Activated CD4-positive, alpha-beta memory T cell treated with anti-CD3 and anti-CD28 coated beads, Interleukin-2, amount 10 ng/mL, durations not matched to agents 7 days and 5 days (primary cell): ENCODE measurements at regions of chr1 and their contacts with region 1.

Region 1: DNA sequence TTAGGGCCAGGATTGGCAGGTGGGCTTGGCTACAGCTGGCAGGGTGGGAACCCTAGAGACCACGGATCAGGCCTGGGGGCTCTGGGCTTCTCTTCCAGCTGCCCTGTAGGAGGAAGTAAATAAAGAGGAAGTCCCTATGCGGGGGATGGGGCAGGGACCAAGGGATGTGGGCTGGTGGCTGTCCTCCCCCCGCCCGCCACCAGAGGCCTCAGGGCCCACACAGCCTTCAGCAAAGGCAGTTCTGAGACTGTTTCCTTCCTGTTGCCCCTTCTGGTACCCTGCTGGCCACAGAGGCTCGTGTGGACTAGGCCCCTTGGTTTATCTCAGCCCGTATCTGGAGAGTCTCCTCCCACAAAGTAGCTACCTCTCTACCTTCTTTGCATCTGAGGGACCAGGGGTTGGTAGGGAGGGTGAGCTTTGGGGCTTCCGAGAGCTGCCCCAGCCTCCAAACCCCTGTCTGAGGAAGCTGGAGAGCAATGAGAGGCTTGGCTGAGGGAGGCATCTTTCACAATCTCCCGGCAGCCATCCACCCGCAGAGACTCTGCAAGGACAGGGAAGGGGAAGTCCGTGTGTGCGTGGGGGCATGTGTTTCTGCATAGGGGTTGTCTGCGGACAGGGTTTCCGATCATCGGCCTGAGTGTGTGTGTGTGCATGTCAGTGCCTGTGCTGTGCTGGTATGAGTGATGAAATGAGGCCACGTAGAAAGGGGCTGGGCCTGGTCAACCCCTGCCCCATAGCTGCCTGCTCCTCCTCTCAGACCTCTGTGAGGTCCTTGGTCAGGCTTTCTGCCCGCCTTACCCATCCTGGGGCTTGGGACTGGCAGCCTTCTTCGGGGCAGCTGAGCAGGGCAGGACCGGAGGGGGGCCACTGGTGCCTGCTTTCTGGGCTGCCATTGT is 12.5 kb downstream of the RPS6KA1 start:
- DNase-seq: peak; percentile 89
- H3K4me3 Mint-ChIP-seq: peak overlapping the region; percentile 74
- H3K27ac Mint-ChIP-seq: peak overlapping the region; percentile 96
- H3K4me1 Mint-ChIP-seq: peaks cover 93% of the 10 kb centered on the region
- H3K27me3 Mint-ChIP-seq: no peaks in the 10 kb centered on the region

Region 2: DNA sequence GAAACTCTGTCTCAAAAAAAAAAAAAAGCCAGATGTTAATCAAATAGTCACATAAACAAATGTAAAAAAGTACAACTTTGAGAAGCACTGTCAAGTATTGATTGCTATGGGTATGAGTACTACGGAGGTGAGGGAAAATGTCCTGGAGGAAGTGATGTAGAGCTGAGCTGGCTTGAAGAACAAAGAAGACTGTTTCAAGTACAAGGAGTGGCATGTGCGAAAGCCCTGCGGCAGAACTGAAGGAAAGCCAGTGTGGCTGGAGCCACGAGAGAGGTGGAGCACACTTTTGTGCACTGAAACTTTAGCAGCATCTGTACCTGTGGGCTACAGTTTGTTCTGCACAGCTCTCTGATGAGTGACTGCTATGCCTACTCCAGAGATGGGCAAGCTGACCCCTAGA is 17.9 kb before region 1 on chr1:
- CTCF ChIA-PET with region 1: interaction called, 45 read pairs
- POLR2A ChIA-PET with region 1: interaction called, 62 read pairs
- DNase-seq: no peak
- H3K4me3 Mint-ChIP-seq: no peak overlapping the region
- H3K27ac Mint-ChIP-seq: no peak overlapping the region
- H3K4me1 Mint-ChIP-seq: peaks cover 8% of the 10 kb centered on the region
- H3K27me3 Mint-ChIP-seq: peaks cover 25% of the 10 kb centered on the region

Region 3: DNA sequence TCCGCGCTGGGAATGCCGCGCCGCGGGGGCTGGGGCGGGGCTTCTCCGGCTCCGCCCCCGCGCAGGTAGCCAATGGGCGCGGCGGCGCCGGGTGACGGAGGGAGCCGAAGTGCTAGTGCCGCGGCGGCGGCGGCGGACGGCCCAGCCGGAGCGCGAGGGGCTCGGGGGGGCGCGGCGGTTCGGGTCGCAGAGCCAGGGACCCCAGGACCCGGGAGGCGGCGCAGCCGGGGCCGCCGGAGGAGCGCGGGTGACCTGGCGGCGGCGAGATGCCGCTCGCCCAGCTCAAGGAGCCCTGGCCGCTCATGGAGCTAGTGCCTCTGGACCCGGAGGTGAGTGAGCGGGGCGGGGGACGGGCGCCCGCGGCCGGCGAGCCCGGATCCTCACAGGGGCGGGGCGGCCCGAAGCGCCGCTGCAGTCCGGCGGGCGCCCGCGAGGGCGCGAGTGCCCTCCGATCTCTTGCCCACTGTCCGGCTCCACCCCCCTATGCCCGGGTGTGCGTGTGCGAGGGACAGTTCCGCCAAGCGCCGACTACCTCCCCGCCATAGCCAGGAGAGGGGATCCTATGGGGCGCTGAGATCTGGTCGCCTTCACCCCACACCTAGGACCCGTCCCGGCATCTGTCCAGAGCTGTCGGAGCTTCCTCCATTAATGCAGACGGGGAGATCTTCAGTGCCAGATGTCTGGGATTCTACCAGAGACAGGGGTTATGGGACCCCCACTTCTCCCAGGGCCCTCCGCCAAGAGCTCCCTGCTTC is 12.2 kb before region 1 on chr1 and contains the start of gene RPS6KA1:
- CTCF ChIA-PET with region 1: interaction called, 45 read pairs
- POLR2A ChIA-PET with region 1: interaction called, 62 read pairs
- DNase-seq: peak; percentile 71
- H3K4me3 Mint-ChIP-seq: peak within 1 kb of the TSS; percentile 84
- H3K27ac Mint-ChIP-seq: peak within 1 kb of the TSS; percentile 80
- H3K4me1 Mint-ChIP-seq: peaks cover 43% of the 10 kb centered on the region
- H3K27me3 Mint-ChIP-seq: peaks cover 5% of the 10 kb centered on the region
- total RNA-seq, gene RPS6KA1: 170 to 175 TPM

Region 4: DNA sequence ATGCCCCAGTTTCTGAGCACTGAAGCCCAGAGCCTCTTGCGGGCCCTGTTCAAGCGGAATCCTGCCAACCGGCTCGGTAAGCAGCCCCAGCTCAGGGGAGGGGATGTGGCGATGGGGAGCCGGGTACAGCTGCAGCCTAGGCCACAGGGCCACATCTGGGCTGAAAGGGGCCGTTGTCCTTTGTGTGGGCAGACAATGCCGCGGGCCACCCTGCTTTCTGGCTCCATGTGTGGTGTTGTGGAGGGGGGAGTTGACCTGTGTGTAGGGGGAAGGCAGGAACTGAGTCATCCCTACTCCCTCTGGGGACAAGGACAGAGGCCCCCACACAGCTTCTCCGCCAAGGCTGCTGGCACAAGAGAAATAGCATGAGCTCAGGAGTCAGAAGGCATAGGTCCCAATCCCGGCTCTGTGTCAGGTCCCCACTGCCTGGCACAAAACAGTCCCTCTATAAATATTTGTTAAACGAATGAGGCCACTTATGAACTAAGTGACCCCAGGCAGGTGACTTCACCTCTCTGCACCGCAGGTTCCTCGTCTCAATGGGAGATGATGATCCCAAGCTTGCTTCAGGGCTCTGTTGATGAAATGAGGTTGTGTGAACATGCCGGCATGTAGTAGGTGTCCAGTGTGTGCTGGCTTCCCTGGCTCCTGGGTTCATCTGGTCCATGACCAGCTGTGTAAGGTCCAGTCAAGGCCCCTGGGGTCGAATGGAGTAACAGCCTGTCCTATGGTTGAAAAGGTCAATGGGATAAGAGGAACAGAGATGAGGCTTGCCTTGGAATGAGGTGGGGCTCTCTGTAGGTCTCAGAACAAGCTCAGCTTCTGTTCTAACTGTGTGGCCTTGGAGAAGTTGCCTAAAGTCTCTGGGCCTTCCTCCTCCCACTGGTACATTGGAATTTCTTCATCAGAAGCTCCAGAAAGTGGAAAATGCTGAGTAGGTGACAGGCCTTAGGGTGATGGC is 13.8 kb after region 1 on chr1:
- CTCF ChIA-PET with region 1: interaction called, 26 read pairs
- POLR2A ChIA-PET with region 1: interaction called, 13 read pairs
- DNase-seq: no peak
- H3K4me3 Mint-ChIP-seq: no peak overlapping the region
- H3K27ac Mint-ChIP-seq: peak overlapping the region; percentile 55
- H3K4me1 Mint-ChIP-seq: peaks cover 45% of the 10 kb centered on the region
- H3K27me3 Mint-ChIP-seq: no peaks in the 10 kb centered on the region